ENCODE measurements at regions of chr15 and their contacts with region 1.

Region 1: GRCh38 chr15:97903971-97904572 is 56.4 kb upstream of the ARRDC4 start:
- DNase-seq: peak in 1 of 2 donors; percentile 70
- H3K4me3 ChIP-seq: no peak overlapping the region
- H3K27ac ChIP-seq: no peak overlapping the region
- H3K4me1 ChIP-seq: no peaks in the 10 kb centered on the region
- H3K27me3 ChIP-seq: no peaks in the 10 kb centered on the region
- CTCF ChIP-seq: peak; percentile 22 to 58 (median 39)

Region 2: GRCh38 chr15:98085003-98085639 is 181.0 kb after region 1 on chr15:
- intact Hi-C with region 1: loop called (anchors 1 kb)
- DNase-seq: no peak
- H3K4me3 ChIP-seq: no peak overlapping the region
- H3K27ac ChIP-seq: no peak overlapping the region
- H3K4me1 ChIP-seq: no peaks in the 10 kb centered on the region
- H3K27me3 ChIP-seq: no peaks in the 10 kb centered on the region
- CTCF ChIP-seq: peak; percentile 37 to 58 (median 50)

Region 3: DNA sequence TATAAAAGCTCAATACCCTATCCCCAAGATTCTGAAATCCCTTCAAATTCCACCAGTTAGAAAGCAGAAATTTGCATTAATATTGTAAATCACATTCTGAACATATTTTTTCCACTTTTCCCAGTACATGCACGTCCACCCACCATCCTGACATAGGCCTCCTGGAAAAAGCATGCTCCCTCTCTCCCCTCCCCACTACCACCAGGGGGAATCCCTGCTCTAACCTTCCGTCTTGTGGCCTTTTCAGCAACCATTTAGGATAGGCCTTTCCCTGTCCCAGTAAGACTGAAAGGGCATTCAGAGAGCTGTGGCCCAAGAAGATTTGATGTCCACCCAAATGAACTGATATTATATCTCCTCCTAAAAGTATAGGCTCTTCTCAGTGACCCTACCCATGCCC is 238.5 kb after region 1 on chr15:
- intact Hi-C with region 1: no loop called
- DNase-seq: no peak
- H3K4me3 ChIP-seq: no peak overlapping the region
- H3K27ac ChIP-seq: no peak overlapping the region
- H3K4me1 ChIP-seq: no peaks in the 10 kb centered on the region
- H3K27me3 ChIP-seq: no peaks in the 10 kb centered on the region
- CTCF ChIP-seq: no peak

Region 4: DNA sequence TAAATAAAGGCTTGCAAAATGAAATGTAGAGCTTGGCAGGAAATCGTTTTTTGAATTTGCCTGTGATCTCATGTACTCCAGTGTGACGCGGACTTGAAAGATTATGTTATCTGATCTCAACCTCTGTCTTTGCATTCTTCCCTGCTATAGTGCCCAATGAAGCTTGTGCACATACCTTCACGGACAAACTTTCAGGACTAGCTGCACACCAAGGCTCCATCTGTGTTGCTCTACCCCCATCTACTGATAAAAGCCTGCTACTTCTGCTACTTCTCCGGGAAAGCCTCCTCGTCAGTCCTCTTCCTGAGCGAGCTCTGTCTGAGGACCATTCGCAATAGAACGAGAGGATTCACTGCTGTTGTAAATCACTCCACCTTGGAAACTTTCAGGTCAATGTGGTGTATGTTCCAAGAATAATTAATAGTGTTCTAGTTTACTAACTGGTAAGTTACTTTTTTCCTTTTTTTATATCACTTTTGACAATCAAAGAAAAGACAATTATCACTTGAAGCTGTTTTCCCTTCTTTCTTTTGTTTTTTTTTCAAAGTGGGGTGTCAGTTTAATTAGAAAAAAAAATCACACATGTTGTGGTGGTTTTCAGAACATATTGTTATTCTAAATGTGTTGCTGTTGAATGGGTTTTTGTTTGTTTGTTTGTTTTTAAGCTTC is 274.0 kb after region 1 on chr15:
- intact Hi-C with region 1: loop called (anchors 5 kb)
- DNase-seq: no peak
- H3K4me3 ChIP-seq: no peak overlapping the region
- H3K27ac ChIP-seq: no peak overlapping the region
- H3K4me1 ChIP-seq: no peaks in the 10 kb centered on the region
- H3K27me3 ChIP-seq: no peaks in the 10 kb centered on the region
- CTCF ChIP-seq: peak; percentile 36 to 52 (median 42)